ENCODE measurements at regions of chrX and their contacts with region 1.

Region 1: DNA sequence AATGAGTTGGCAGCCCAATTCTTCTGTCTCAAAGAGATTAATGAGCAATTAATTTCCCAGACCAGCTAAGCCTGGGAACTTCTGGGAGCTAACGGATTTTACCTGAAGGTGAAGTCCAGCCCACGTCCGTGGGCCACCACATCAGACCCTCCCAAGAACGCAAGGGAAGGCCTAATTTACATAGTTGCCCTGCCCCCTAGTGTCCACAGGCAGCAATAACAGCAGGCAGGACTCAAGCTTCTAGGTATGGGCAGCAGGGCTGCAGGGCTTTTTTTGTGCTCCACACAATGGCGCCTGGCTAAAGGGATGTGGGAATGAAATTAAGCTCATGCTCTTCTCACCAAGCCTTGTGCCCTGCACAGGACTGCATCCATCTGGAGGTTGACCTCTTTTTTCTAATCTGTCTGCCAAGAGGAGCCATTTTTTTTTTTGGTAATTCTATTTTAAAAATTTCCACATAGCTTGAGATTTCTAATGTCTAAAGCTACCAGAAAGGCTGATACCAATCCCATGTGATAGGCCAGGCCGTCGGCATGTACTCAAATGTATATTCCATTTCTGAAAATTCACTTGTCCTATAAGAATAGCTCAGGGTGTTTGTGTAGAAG is 111.9 kb upstream of the TMEM164 start:
- DNase-seq: peak; percentile 56
- CTCF ChIP-seq: peak; percentile 87

Region 2: DNA sequence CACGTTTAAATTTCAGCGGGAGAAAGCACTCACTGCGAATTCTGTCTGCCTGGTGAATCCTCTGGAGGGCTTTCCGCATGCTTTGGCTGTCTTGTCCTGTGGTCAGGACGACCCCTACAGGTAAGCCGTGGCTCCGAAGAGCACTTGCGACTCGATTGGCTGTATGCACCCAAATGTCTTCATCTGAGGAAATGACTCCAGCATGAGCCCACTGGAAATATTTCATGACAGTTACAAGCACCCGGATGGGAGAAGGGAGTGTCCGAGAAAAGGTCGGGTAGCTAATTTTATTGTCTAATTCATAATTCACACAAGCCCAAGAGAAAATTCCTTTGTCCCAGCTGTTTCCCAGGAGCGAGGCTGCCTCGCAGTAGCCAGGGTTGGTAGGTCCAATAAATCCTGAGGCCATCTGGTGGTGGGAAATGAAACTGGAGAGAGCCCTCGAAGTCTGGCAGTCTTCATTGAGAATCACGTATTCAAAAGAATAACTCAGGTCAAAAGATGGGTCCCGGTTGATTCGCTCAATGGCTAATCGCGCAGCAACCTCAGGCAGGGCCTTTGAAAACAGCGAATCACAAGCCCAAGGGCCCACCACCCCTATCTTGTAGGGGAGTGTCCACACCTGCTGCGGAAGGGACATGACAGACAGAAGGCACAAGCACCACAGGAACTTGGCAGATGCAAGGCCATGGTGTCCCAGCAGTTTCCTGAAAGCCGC is 415.7 kb before region 1 on chrX:
- CTCF ChIA-PET with region 1: interaction called, 19 read pairs
- POLR2A ChIA-PET with region 1: no interaction called
- DNase-seq: no peak
- CTCF ChIP-seq: no peak

Region 3: GRCh38 chrX:109696146-109696740 is 194.8 kb before region 1 on chrX:
- CTCF ChIA-PET with region 1: interaction called, 12 read pairs
- POLR2A ChIA-PET with region 1: no interaction called
- DNase-seq: no peak
- CTCF ChIP-seq: no peak

Region 4: GRCh38 chrX:109862433-109862832 is 28.6 kb before region 1 on chrX:
- CTCF ChIA-PET with region 1: interaction called, 11 read pairs
- POLR2A ChIA-PET with region 1: no interaction called
- DNase-seq: no peak
- CTCF ChIP-seq: no peak

Region 5: GRCh38 chrX:109880629-109881028 is 10.4 kb before region 1 on chrX:
- CTCF ChIA-PET with region 1: interaction called, 38 read pairs
- POLR2A ChIA-PET with region 1: no interaction called
- DNase-seq: peak; percentile 49
- CTCF ChIP-seq: no peak

Region 6: GRCh38 chrX:110021180-110022022 is 130.4 kb after region 1 on chrX:
- CTCF ChIA-PET with region 1: no interaction called
- POLR2A ChIA-PET with region 1: no interaction called
- DNase-seq: no peak
- CTCF ChIP-seq: no peak

Region 7: GRCh38 chrX:110146521-110146920 is 255.5 kb after region 1 on chrX:
- CTCF ChIA-PET with region 1: interaction called, 12 read pairs
- POLR2A ChIA-PET with region 1: no interaction called
- DNase-seq: peak; percentile 45
- CTCF ChIP-seq: peak; percentile 60

Region 8: DNA sequence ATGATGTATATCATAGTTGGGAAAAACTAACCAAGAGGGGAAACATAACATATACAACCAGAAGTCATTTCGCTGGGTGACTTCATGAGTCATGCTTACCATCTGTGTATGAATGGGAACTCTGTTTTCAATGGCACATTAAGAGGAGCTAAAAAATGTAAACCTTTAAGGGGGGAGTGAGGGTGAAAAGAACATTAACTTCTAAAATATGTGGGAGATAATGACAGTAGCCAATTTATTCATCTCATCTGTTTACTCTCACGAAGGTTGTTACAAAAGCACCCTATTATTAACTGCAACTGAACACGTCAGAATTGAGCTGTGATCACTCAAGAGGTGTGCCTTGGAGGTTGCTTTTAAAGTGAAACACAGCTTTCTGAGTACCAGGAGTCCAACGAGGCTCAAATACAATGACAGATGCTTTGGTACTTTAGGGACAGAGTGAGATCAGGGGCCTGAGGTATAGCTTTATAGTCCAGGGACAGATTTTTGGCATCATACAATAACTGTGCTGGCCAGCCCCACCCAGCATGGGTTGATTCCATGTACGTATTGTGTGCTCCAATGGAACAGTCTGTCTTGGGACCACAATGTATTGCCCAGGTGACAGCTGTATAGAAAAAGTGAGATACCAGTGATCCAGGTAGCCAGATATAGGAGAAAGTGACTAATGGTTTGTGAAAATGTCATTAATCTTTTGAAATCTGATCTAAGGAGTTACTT is 319.6 kb after region 1 on chrX:
- CTCF ChIA-PET with region 1: no interaction called
- POLR2A ChIA-PET with region 1: no interaction called
- DNase-seq: no peak
- CTCF ChIP-seq: no peak